Caco-2 (cell line): ENCODE measurements at regions of chr2 and their contacts with region 1.

Region 1: DNA sequence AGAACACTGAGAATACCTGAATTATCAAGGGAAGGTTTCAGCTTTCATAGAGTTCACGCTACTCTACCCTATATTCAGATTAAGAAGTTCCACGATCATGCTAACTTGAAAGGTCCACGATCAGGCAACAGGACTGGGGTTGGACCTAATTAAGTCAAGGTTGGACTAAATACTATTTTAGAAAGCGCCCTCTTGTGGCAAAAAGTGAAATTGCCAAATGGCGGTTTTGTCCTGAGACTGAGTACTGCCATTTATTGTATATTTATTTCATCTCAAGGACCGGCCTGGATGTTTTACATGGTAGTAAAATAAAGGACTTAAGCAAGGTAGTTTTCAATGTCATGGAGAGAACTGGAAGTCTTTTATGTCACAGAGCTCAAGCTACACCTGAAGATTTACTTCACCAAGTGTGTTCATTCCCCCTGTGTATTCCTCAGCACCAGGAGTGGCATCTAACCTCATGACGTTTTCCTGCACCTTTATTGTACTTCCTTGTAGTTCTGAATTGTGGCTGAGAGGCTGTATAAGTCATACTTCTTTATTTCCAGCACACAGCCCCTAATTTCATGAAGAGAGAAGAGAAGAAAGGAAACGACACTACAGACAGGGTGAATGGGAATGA is 56.8 kb downstream of the SRD5A2 start:
- DNase-seq: peak; percentile 46 to 65
- H3K4me3 ChIP-seq: no peak overlapping the region
- H3K4me3 Mint-ChIP-seq: no peak overlapping the region
- H3K27ac Mint-ChIP-seq: no peak overlapping the region
- H3K4me1 ChIP-seq: no peaks in the 10 kb centered on the region
- H3K4me1 Mint-ChIP-seq: no peaks in the 10 kb centered on the region
- H3K27me3 ChIP-seq: no peaks in the 10 kb centered on the region
- H3K27me3 Mint-ChIP-seq: peaks cover 3% of the 10 kb centered on the region
- CTCF ChIP-seq: peak; percentile 63 to 76

Region 2: GRCh38 chr2:31008561-31009114 is 515.3 kb before region 1 on chr2:
- CTCF ChIA-PET with region 1: no interaction called
- POLR2A ChIA-PET with region 1: no interaction called
- intact Hi-C with region 1: no loop called
- DNase-seq: no peak
- H3K4me3 ChIP-seq: no peak overlapping the region
- H3K4me3 Mint-ChIP-seq: no peak overlapping the region
- H3K27ac Mint-ChIP-seq: no peak overlapping the region
- H3K4me1 ChIP-seq: no peaks in the 10 kb centered on the region
- H3K4me1 Mint-ChIP-seq: no peaks in the 10 kb centered on the region
- H3K27me3 ChIP-seq: peaks cover 6% of the 10 kb centered on the region
- H3K27me3 Mint-ChIP-seq: peaks cover 35% of the 10 kb centered on the region
- CTCF ChIP-seq: no peak

Region 3: GRCh38 chr2:31413862-31414550 is 110.0 kb before region 1 on chr2:
- CTCF ChIA-PET with region 1: interaction called, 3 read pairs
- POLR2A ChIA-PET with region 1: no interaction called
- intact Hi-C with region 1: loop called (anchors 1 kb)
- DNase-seq: peak in 1 of 2 experiments; percentile 28
- H3K4me3 ChIP-seq: no peak overlapping the region
- H3K4me3 Mint-ChIP-seq: no peak overlapping the region
- H3K27ac Mint-ChIP-seq: no peak overlapping the region
- H3K4me1 ChIP-seq: no peaks in the 10 kb centered on the region
- H3K4me1 Mint-ChIP-seq: no peaks in the 10 kb centered on the region
- H3K27me3 ChIP-seq: no peaks in the 10 kb centered on the region
- H3K27me3 Mint-ChIP-seq: no peaks in the 10 kb centered on the region
- CTCF ChIP-seq: peak; percentile 26 to 55

Region 4: GRCh38 chr2:32212295-32212694 is 688.3 kb after region 1 on chr2:
- CTCF ChIA-PET with region 1: interaction called, 6 read pairs
- POLR2A ChIA-PET with region 1: no interaction called
- intact Hi-C with region 1: loop called (anchors 5 kb)
- DNase-seq: no peak
- H3K4me3 ChIP-seq: no peak overlapping the region
- H3K4me3 Mint-ChIP-seq: no peak overlapping the region
- H3K27ac Mint-ChIP-seq: no peak overlapping the region
- H3K4me1 ChIP-seq: no peaks in the 10 kb centered on the region
- H3K4me1 Mint-ChIP-seq: no peaks in the 10 kb centered on the region
- H3K27me3 ChIP-seq: no peaks in the 10 kb centered on the region
- H3K27me3 Mint-ChIP-seq: no peaks in the 10 kb centered on the region
- CTCF ChIP-seq: peak in 1 of 2 experiments; percentile 20